CD4-positive, alpha-beta memory T cell (primary cell): ENCODE measurements at regions of chr19 and their contacts with region 1.

Region 1: DNA sequence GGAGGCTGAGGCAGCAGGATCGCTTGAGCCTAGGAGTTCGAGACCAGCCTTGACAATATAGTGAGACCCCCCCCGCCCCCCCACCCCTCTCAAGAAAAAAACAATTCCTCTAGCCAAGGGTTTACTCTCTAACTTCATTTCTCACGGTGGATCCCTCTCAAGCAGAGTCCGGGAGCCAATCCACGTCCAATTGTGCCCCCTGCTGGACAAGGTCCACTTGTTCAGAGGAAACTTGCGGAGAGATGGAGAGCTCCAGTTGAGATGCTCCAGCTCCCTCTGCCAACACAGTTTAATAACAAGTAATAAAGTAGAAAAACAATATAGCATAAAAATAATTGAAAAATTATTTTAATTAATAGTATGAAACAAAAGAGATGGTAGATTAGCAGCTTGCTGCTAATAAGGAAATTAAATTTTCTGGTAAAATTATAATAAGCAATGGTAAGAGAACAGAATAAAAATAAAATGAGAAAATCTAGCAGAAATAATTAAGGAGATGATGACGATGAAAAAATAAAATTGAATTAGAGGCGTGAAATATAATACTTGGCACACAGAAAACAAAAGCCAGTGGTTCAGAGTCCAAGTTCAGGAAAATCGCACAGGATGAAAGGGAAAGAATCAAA is 14.5 kb upstream of the SIGLEC14 start:
- DNase-seq: peak in 4 of 5 donors; percentile 13 to 56 (median 24)
- H3K4me3 ChIP-seq: no peak overlapping the region
- H3K4me3 Mint-ChIP-seq: no peak overlapping the region
- H3K27ac ChIP-seq: no peak overlapping the region
- H3K27ac Mint-ChIP-seq: no peak overlapping the region
- H3K4me1 ChIP-seq: peaks cover 3% of the 10 kb centered on the region
- H3K4me1 Mint-ChIP-seq: peaks cover 5 to 6% (median 6%) of the 10 kb centered on the region in 4 donors
- H3K27me3 ChIP-seq: no peaks in the 10 kb centered on the region
- H3K27me3 Mint-ChIP-seq: peaks cover 20 to 26% of the 10 kb centered on the region in 2 donors

Region 2: DNA sequence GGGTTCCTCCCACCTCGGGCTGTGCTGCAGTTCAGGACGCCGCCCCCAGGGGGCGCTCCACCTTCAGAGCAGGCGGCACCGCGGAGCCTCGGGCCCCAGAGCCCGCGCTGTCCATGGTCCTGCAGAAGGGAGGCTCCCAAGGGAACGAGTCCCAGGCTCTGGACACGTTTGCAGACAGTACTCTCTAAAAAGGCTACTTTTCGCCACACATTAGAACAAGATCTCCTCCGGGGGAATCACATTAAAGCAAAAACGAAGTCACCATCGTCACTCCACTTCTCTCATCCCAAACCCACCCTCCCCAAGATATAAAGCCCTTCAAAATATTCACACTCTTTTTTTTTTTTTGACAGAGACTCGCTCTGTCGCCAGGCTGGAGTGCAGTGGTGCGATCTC is 239.0 kb before region 1 on chr19:
- CTCF ChIA-PET with region 1: interaction called, 11 read pairs
- POLR2A ChIA-PET with region 1: no interaction called
- intact Hi-C with region 1: loop called (anchors 2 kb)
- DNase-seq: peak; percentile 67 to 75 (median 69)
- H3K4me3 ChIP-seq: no peak overlapping the region
- H3K4me3 Mint-ChIP-seq: no peak overlapping the region
- H3K27ac ChIP-seq: no peak overlapping the region
- H3K27ac Mint-ChIP-seq: peak overlapping the region in 1 of 7 donors; percentile 24
- H3K4me1 ChIP-seq: no peaks in the 10 kb centered on the region
- H3K4me1 Mint-ChIP-seq: peaks cover 0 to 8% (median 3%) of the 10 kb centered on the region in 4 donors
- H3K27me3 ChIP-seq: no peaks in the 10 kb centered on the region
- H3K27me3 Mint-ChIP-seq: peaks cover 8 to 18% of the 10 kb centered on the region in 2 donors

Region 3: GRCh38 chr19:51647318-51647717 is 13.8 kb before region 1 on chr19:
- CTCF ChIA-PET with region 1: interaction called, 18 read pairs
- POLR2A ChIA-PET with region 1: no interaction called
- intact Hi-C with region 1: no loop called
- DNase-seq: no peak
- H3K4me3 ChIP-seq: no peak overlapping the region
- H3K4me3 Mint-ChIP-seq: no peak overlapping the region
- H3K27ac ChIP-seq: no peak overlapping the region
- H3K27ac Mint-ChIP-seq: no peak overlapping the region
- H3K4me1 ChIP-seq: no peaks in the 10 kb centered on the region
- H3K4me1 Mint-ChIP-seq: peaks cover 0 to 2% (median 0%) of the 10 kb centered on the region in 4 donors
- H3K27me3 ChIP-seq: no peaks in the 10 kb centered on the region
- H3K27me3 Mint-ChIP-seq: peaks cover 23 to 29% of the 10 kb centered on the region in 2 donors

Region 4: DNA sequence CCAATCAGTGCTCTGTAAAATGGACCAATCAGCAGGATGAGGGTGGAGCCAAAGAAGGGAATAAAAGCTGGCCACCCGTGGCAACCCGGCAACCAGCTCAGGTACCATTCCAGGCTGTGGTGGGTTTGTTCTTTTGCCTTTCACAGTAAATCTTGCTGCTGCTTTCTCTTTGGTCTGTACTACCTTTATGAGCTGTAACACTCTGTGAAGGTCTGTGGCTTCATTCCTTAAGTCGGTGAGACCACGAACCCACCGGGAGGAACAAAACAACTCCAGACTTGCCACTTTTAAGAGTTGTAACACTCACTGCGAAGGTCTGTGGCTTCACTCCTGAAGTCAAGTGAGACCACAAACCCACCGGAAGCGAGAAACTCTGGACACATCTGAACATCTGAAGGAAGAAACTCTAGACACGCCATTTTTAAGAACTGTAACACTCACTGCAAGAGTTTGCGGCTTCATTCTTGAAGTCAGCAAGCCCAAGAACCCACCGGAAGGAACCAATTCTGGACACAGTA is 15.5 kb after region 1 on chr19:
- CTCF ChIA-PET with region 1: interaction called, 29 read pairs
- POLR2A ChIA-PET with region 1: no interaction called
- intact Hi-C with region 1: no loop called
- DNase-seq: peak in 2 of 5 donors; percentile 15 to 45
- H3K4me3 ChIP-seq: no peak overlapping the region
- H3K4me3 Mint-ChIP-seq: peak overlapping the region in 7 of 8 donors; percentile 55 to 82 (median 70)
- H3K27ac ChIP-seq: no peak overlapping the region
- H3K27ac Mint-ChIP-seq: peak overlapping the region in 4 of 7 donors; percentile 37 to 74 (median 57)
- H3K4me1 ChIP-seq: no peaks in the 10 kb centered on the region
- H3K4me1 Mint-ChIP-seq: peaks cover 4 to 15% (median 8%) of the 10 kb centered on the region in 4 donors
- H3K27me3 ChIP-seq: no peaks in the 10 kb centered on the region
- H3K27me3 Mint-ChIP-seq: peaks cover 3 to 8% of the 10 kb centered on the region in 2 donors

Region 5: DNA sequence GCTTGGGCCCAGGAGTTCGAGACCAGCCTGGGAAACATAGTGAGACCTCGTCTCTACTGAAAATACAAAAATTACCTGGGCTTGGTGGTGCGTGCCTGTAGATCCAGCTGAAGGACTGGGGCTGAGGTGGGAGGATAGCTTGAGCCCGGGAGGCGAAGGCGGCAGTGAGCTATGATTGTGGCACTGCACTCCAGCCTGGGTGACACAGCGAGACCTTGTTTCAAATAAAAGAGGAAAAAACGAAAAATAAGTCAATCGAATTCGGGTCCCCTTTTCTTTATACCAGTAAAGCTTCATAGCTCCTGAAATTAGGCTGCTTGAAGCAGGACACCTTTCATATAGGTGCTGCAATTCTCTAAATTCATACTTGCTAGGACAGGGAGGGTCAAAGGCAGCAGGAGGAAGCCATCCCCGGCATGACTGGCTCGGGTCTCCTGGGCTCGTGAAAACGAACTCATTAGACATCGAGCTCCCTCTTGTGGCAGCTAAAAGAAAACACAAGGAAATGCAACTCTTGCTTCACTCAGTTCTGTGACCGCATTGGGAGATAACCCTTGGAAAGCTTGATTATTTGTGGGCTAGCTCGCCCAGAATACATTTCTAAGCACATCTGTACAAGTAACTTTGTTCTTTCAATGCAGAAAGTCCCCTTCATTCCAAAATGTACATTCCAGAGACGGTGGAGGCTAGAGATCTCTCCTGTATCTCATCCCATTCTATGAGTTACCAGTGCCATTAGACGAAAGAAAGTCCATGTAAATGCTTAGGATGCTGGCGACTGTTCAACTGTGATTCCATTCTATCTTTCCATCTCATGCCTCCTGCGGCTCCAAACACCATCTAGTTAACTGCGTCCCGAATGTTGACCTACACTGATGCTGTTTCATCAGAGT is 116.7 kb after region 1 on chr19:
- CTCF ChIA-PET with region 1: interaction called, 10 read pairs
- POLR2A ChIA-PET with region 1: no interaction called
- intact Hi-C with region 1: loop called (anchors 1 kb)
- DNase-seq: peak; percentile 28 to 48 (median 31)
- H3K4me3 ChIP-seq: no peak overlapping the region
- H3K4me3 Mint-ChIP-seq: no peak overlapping the region
- H3K27ac ChIP-seq: no peak overlapping the region
- H3K27ac Mint-ChIP-seq: no peak overlapping the region
- H3K4me1 ChIP-seq: no peaks in the 10 kb centered on the region
- H3K4me1 Mint-ChIP-seq: peaks cover 0 to 2% (median 0%) of the 10 kb centered on the region in 4 donors
- H3K27me3 ChIP-seq: no peaks in the 10 kb centered on the region
- H3K27me3 Mint-ChIP-seq: peaks cover 35 to 49% of the 10 kb centered on the region in 2 donors